Stomach (tissue), 19 donors: ENCODE measurements at regions of chr1 and their contacts with region 1.

Region 1: DNA sequence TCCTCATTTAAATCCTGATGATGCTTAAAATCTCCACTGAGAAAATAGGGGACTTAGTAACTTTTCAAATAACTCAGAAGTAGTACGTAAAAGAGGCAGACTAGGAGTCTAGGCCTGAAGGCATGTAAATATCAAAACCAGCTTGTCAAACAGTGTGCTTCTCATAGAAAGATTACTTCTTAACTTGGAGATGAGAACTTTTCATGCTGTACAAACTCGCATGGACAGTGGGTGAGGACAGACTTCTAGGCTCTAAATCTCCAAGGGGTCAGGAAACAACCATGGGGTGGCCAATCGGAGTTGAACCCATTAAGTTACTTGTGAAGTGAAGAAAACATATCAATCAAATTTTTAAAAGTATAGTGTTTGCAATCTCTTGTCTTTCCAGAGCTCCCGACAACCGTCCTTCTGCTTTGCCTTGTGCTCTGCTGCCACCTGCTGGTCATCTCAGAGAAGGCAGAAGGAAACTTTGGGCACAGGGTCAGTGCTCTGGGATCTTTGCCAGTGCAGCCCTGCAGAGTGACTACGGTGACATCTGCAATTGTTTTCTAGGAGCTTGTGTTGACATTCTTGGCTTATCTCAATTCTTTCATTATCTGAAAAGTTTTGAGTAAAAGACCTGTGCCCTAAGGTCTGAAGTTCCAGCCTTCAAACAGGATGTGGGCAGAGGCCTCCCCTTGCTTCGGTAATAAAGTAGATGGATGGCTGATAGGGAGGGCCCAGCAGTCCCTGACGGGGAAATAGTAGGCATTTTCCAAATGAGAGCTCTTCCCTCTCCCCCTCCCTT is 105.1 kb upstream of the PDE4B start:
- DNase-seq: peak; percentile 93
- H3K4me3 ChIP-seq: no peak overlapping the region
- H3K27ac ChIP-seq: no peak overlapping the region
- H3K4me1 ChIP-seq: peaks cover 0 to 19% (median 18%) of the 10 kb centered on the region in 4 donors
- H3K27me3 ChIP-seq: peaks cover 0 to 5% (median 0%) of the 10 kb centered on the region in 3 donors
- CTCF ChIP-seq: peak in 6 of 7 experiments; percentile 39 to 97 (median 94)
- EP300 ChIP-seq: no peak
- POLR2A ChIP-seq: no peak

Region 2: GRCh38 chr1:65235867-65236805 is 451.5 kb before region 1 on chr1:
- intact Hi-C with region 1: loop called (anchors 10 kb)
- DNase-seq: peak in 1 of 2 donors; percentile 31
- H3K4me3 ChIP-seq: no peak overlapping the region
- H3K27ac ChIP-seq: no peak overlapping the region
- H3K4me1 ChIP-seq: peaks cover 0 to under 1% (median 0%) of the 10 kb centered on the region in 4 donors
- H3K27me3 ChIP-seq: no peaks in the 10 kb centered on the region
- CTCF ChIP-seq: peak in 4 of 7 experiments; percentile 37 to 51 (median 44)
- EP300 ChIP-seq: no peak
- POLR2A ChIP-seq: no peak

Region 3: DNA sequence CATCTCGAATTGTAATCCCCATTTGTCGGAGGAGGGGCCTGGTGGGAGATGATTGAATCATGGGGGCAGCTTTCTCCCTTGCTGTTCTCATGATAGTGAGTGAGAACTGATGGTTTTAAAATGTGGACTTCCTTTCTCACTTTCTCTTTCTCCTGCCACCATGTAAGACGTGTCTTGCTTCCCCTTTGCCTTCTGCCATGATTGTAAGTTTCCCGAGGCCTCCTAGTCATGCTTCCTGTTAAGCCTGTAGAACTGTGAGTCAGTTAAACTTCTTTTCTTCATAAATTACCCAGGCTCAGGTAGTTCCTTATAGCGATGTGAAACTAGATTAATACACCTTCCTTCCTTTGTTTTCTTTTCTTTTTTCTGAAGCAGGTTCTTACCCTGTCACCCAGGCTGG is 364.4 kb before region 1 on chr1:
- intact Hi-C with region 1: no loop called
- DNase-seq: no peak
- H3K4me3 ChIP-seq: no peak overlapping the region
- H3K27ac ChIP-seq: no peak overlapping the region
- H3K4me1 ChIP-seq: no peaks in the 10 kb centered on the region
- H3K27me3 ChIP-seq: no peaks in the 10 kb centered on the region
- CTCF ChIP-seq: no peak
- EP300 ChIP-seq: no peak
- POLR2A ChIP-seq: no peak

Region 4: GRCh38 chr1:65419681-65420589 is 267.7 kb before region 1 on chr1:
- intact Hi-C with region 1: loop called (anchors 10 kb)
- DNase-seq: peak; percentile 99
- H3K4me3 ChIP-seq: peak overlapping the region; percentile 75 to 88 (median 80)
- H3K27ac ChIP-seq: peak overlapping the region; percentile 97 to 100 (median 99)
- H3K4me1 ChIP-seq: peaks cover 15 to 47% (median 37%) of the 10 kb centered on the region in 4 donors
- H3K27me3 ChIP-seq: no peaks in the 10 kb centered on the region
- CTCF ChIP-seq: no peak
- EP300 ChIP-seq: no peak
- POLR2A ChIP-seq: no peak

Region 5: DNA sequence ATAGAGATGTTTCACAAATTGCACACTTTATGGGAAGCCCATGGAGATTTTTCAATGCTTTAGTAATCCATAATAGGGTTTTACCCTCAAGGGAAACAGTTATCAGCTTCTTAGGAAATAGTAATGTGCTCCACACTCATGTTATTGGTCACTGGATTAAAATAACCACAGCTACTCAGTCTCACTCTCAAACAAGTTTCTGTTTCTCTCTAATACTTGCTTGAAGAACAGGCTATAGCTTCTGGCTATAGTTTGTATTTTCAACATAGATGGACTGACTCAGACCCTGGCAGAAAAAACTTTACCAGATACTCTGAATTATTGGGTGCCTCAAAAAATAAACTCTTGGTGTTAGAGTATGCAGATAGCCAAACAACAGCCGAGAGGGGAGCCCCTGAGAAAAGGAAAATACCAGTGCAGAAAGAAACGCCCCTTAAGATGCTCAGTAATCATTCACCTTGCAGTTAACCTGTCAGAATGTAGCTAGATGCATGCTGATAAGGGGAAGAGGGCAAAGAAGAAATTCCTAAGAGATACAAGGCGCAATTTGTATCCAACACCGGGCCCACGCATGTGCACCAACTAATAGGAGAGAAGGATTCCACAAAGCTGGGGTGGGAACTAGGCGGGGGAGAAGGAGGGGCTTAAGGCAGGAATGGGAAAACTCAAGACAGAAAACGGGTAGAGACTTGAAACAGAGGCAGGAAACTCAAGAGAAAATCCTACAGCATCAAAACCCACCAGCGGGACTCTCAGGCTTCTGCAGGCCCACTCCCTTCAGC is 74.7 kb after region 1 on chr1:
- intact Hi-C with region 1: no loop called
- DNase-seq: no peak
- H3K4me3 ChIP-seq: no peak overlapping the region
- H3K27ac ChIP-seq: no peak overlapping the region
- H3K4me1 ChIP-seq: peaks cover 0 to 5% (median 0%) of the 10 kb centered on the region in 4 donors
- H3K27me3 ChIP-seq: no peaks in the 10 kb centered on the region
- CTCF ChIP-seq: no peak
- EP300 ChIP-seq: no peak
- POLR2A ChIP-seq: no peak